Endothelial cell of umbilical vein (primary cell): ENCODE measurements at regions of chrX and their contacts with region 1.

Region 1: DNA sequence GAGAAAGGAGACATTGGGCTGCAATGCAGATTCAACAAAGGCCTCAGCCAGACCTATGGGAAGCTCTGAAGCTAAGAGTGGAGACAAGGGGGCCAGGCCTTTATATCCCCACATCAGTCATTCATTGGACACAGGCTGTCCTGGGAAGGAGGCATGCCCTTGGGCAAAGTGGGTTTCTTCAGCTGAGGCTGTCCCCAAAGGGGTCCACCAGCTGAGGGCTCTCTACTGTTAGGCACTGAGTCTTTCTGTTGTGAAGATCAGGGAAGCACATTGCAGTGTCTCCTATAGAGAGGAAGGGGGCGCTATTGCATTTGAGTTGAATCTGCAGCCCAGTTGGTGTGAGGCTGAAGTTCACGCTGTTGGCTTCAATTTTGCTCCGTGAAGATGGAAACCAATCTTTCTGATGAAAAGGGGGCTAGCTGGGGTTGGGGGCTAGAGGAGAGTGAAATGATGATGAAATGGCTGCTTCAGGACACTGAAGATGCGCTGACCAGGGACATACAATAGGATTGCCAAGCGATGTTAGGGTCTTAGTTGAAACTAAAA is 48.0 kb downstream of the SLC25A5 start:
- DNase-seq: peak; percentile 67
- H3K4me3 ChIP-seq: no peak overlapping the region
- H3K27ac ChIP-seq: no peak overlapping the region
- H3K4me1 ChIP-seq: no peaks in the 10 kb centered on the region
- H3K27me3 ChIP-seq: no peaks in the 10 kb centered on the region
- CTCF ChIP-seq: peak; percentile 69 to 82
- POLR2A ChIP-seq: no peak

Region 2: DNA sequence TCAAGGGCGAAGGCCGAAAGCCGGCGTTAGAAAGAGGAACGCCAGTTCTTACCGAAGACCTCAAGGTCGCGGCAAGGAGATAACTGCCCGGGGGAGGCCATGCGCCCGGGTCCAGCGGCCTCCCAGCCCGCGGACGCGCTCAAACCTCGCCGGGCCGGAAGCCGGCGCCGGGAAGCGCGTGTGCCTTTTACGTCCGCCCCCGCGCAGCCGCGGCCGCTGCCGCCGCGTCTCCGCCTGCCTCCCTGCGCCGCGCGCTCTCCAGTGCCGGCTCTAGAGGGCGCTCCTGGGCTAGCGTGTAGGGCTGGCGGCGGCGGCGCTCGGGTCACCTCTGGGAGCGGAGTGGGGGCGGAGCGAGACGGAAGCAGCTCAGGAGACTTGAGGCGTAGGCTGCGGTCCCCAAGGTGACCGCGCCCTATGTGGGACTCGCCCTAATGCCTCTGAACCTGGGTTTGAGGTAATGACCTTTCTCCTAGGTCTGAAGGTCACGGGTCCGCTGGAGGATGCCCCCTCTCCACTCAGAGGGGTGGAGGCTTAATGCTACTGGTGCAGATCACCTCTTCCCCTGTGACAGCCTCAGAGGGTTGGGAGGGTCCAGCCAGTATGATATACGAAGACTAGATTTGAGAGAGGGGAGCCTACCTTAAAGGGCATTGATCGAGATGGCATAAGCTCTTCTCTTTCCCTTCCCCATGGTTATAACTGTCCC is 47.1 kb before region 1 on chrX:
- CTCF ChIA-PET with region 1: interaction called, 9 read pairs
- POLR2A ChIA-PET with region 1: no interaction called
- dilution Hi-C with region 1: no loop called
- intact Hi-C with region 1: loop called (anchors 1 kb)
- DNase-seq: peak; percentile 81
- H3K4me3 ChIP-seq: peak overlapping the region; percentile 51 to 89 (median 58)
- H3K27ac ChIP-seq: peak overlapping the region; percentile 87
- H3K4me1 ChIP-seq: peaks cover 5% of the 10 kb centered on the region
- H3K27me3 ChIP-seq: no peaks in the 10 kb centered on the region
- CTCF ChIP-seq: peak; percentile 53 to 71
- POLR2A ChIP-seq: no peak

Region 3: GRCh38 chrX:119495734-119496726 is 20.2 kb before region 1 on chrX:
- CTCF ChIA-PET with region 1: interaction called, 217 read pairs
- POLR2A ChIA-PET with region 1: no interaction called
- dilution Hi-C with region 1: no loop called
- intact Hi-C with region 1: no loop called
- DNase-seq: no peak
- H3K4me3 ChIP-seq: no peak overlapping the region
- H3K27ac ChIP-seq: no peak overlapping the region
- H3K4me1 ChIP-seq: no peaks in the 10 kb centered on the region
- H3K27me3 ChIP-seq: peaks cover 0 to 2% of the 10 kb centered on the region in 2 experiments
- CTCF ChIP-seq: no peak
- POLR2A ChIP-seq: no peak

Region 4: GRCh38 chrX:119606280-119607015 is 90.2 kb after region 1 on chrX and contains the start of gene NKRF:
- CTCF ChIA-PET with region 1: interaction called, 27 read pairs
- POLR2A ChIA-PET with region 1: no interaction called
- dilution Hi-C with region 1: no loop called
- intact Hi-C with region 1: loop called (anchors 1 kb)
- DNase-seq: peak; percentile 92
- H3K4me3 ChIP-seq: peak within 1 kb of the TSS; percentile 16 to 63 (median 54)
- H3K27ac ChIP-seq: peak within 1 kb of the TSS; percentile 63
- H3K4me1 ChIP-seq: peaks cover 2% of the 10 kb centered on the region
- H3K27me3 ChIP-seq: peaks cover 0 to 3% of the 10 kb centered on the region in 2 experiments
- CTCF ChIP-seq: no peak
- POLR2A ChIP-seq: peak; percentile 78
- total RNA-seq, gene NKRF: 10.8 and 12.0 TPM in 2 replicates

Region 5: GRCh38 chrX:119753571-119754257 is 237.5 kb after region 1 on chrX:
- CTCF ChIA-PET with region 1: interaction called, 11 read pairs
- POLR2A ChIA-PET with region 1: no interaction called
- dilution Hi-C with region 1: no loop called
- intact Hi-C with region 1: loop called (anchors 1 kb)
- DNase-seq: peak; percentile 56
- H3K4me3 ChIP-seq: no peak overlapping the region
- H3K27ac ChIP-seq: no peak overlapping the region
- H3K4me1 ChIP-seq: no peaks in the 10 kb centered on the region
- H3K27me3 ChIP-seq: no peaks in the 10 kb centered on the region
- CTCF ChIP-seq: peak; percentile 21 to 40
- POLR2A ChIP-seq: no peak

Region 6: GRCh38 chrX:119826399-119826959 is 310.2 kb after region 1 on chrX:
- CTCF ChIA-PET with region 1: no interaction called
- POLR2A ChIA-PET with region 1: no interaction called
- dilution Hi-C with region 1: no loop called
- intact Hi-C with region 1: no loop called
- DNase-seq: peak; percentile 64
- H3K4me3 ChIP-seq: no peak overlapping the region
- H3K27ac ChIP-seq: no peak overlapping the region
- H3K4me1 ChIP-seq: peaks cover 4% of the 10 kb centered on the region
- H3K27me3 ChIP-seq: no peaks in the 10 kb centered on the region
- CTCF ChIP-seq: no peak
- POLR2A ChIP-seq: no peak